ENCODE measurements at regions of chr1 and their contacts with region 1.

Region 1: DNA sequence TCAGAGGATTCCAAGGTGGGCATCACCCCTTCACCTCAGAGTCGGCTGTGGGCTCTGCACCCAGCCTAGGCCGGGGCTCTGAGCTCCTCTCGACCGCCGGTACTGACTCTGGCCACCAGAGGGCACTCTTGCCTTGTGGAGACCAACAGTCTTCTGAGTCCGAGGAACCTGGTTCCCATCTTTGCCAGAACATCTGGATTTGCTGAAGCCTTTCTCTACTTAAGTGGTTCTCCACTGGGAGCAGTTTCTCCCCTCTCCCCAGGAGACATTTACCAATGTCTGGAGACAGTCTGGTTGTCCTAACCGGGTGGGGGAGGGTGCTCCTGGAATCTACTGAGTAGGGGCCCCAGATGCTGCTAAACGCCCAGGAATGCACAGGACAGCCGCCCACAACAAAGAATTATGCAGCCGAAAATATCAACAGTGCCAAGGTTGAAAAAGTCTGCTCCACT is 9.4 kb downstream of the ETV3L start:
- DNase-seq: peak; percentile 90
- H3K4me3 Mint-ChIP-seq: no peak overlapping the region
- H3K27ac Mint-ChIP-seq: no peak overlapping the region
- H3K4me1 Mint-ChIP-seq: peaks cover 17% of the 10 kb centered on the region
- H3K27me3 Mint-ChIP-seq: no peaks in the 10 kb centered on the region
- CTCF ChIP-seq: peak; percentile 99

Region 2: DNA sequence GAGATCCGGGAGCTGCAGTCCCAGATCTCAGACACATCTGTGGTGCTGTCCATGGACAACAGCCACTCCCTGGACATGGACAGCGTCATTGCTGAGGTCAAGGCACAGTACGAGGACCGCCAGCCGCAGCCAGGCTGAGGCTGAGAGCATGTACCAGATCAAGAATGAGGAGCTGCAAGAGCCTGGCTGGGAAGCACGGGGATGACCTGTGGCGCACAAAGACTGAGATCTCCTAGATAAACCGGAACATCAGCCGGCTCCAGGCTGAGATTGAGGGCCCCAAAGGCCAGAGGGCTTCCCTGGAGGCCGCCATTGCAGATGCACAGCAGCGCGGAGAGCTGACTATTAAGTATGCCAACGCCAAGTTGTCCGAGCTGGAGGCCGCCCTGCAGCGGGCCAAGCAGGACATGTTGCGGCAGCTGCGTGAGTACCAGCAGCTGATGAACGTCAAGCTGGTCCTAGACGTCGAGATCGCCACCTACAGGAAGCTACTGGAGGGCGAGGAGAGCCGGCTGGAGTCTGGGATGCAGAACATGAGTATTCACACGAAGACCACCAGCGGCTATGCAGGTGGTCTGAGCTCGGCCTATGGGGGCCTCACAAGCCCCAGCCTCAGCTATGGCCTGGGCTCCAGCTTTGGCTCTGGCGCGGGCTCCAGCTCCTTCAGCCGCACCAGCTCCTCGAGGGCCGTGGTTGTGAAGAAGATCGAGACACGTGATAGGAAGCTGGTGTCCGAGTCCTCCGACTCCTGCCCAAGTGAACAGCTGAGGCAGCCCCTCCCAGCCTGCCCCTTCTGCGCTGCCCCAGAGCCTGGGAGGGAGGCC is 16.1 kb before region 1 on chr1:
- CTCF ChIA-PET with region 1: interaction called, 31 read pairs
- POLR2A ChIA-PET with region 1: no interaction called
- intact Hi-C with region 1: no loop called
- DNase-seq: peak; percentile 81
- H3K4me3 Mint-ChIP-seq: no peak overlapping the region
- H3K27ac Mint-ChIP-seq: no peak overlapping the region
- H3K4me1 Mint-ChIP-seq: no peaks in the 10 kb centered on the region
- H3K27me3 Mint-ChIP-seq: no peaks in the 10 kb centered on the region
- CTCF ChIP-seq: peak; percentile 60

Region 3: DNA sequence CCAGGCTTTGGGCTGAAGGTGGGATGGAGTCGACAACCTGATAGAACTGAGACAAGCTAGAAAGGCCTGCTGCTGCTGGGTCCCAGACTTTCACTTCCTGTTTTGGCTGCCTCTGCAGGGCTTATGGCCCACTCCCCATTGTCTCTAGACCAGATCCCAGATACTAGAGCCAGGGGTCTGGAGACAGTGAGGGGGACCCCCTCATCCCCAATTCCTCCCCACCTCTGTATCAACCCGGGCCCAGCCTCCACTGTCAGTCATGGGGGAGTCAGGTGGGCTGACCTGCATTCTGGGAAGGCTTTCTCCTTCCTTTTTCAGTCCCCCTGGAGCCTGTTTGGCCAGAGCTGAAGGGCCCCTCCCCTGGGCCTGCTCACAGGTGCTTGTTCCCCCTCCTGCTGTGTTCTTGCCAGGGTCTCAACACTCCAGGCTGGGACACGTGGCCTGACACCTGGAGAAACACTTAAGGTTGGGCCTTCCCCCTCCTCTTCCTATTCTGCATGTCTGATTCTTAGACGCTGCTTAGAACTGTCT is 27.4 kb after region 1 on chr1:
- CTCF ChIA-PET with region 1: interaction called, 32 read pairs
- POLR2A ChIA-PET with region 1: no interaction called
- intact Hi-C with region 1: no loop called
- DNase-seq: no peak
- H3K4me3 Mint-ChIP-seq: no peak overlapping the region
- H3K27ac Mint-ChIP-seq: no peak overlapping the region
- H3K4me1 Mint-ChIP-seq: no peaks in the 10 kb centered on the region
- H3K27me3 Mint-ChIP-seq: peaks cover 13% of the 10 kb centered on the region
- CTCF ChIP-seq: no peak

Region 4: DNA sequence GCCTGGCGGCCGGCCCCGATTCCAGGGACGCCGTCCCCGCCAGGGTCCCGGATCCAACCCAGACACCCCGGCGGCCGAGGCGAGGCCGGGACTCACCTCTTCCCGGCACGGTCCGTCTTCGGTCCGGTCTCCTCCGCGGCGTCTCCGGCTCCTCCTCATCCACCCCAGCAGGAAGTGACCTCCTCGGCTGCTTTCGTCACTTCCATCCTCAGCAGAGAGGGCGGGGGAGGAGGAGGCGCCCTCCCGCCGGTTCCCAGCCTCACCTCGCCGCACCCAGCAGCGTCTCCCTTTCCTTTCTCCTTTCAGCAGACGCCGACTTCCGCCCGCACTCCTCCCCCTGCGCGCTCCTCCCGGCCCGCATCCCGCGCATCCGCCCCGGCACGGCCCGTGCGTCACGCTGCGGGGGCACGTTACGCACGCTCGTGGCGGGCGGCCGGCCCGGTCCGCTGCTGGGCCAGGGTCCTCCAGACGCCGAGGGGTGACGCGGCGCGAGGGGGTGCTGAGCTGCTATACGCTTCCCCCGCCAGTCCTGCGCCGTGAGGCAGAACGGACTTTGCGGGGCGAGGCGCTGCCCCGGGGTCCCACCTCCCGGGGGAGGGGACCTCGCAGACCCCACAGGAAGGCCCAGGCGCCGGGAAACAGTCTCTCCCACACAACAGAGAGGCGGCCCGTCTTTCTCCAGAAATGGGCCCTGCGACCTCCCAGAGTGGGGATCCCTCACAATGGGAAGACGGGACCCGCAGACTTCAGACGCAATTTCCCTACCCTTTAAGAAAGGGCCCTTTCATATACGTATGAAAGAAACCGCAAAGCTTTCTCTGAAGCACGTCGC is 48.2 kb after region 1 on chr1 and contains the start of gene ETV3:
- CTCF ChIA-PET with region 1: interaction called, 183 read pairs
- POLR2A ChIA-PET with region 1: interaction called, 45 read pairs
- intact Hi-C with region 1: loop called (anchors 5 kb)
- DNase-seq: peak; percentile 97
- H3K4me3 Mint-ChIP-seq: peak within 1 kb of the TSS; percentile 79
- H3K27ac Mint-ChIP-seq: peak within 1 kb of the TSS; percentile 76
- H3K4me1 Mint-ChIP-seq: peaks cover 29% of the 10 kb centered on the region
- H3K27me3 Mint-ChIP-seq: no peaks in the 10 kb centered on the region
- CTCF ChIP-seq: no peak
- total RNA-seq, gene ETV3: 28.6 and 35.0 TPM in 2 replicates

Region 5: DNA sequence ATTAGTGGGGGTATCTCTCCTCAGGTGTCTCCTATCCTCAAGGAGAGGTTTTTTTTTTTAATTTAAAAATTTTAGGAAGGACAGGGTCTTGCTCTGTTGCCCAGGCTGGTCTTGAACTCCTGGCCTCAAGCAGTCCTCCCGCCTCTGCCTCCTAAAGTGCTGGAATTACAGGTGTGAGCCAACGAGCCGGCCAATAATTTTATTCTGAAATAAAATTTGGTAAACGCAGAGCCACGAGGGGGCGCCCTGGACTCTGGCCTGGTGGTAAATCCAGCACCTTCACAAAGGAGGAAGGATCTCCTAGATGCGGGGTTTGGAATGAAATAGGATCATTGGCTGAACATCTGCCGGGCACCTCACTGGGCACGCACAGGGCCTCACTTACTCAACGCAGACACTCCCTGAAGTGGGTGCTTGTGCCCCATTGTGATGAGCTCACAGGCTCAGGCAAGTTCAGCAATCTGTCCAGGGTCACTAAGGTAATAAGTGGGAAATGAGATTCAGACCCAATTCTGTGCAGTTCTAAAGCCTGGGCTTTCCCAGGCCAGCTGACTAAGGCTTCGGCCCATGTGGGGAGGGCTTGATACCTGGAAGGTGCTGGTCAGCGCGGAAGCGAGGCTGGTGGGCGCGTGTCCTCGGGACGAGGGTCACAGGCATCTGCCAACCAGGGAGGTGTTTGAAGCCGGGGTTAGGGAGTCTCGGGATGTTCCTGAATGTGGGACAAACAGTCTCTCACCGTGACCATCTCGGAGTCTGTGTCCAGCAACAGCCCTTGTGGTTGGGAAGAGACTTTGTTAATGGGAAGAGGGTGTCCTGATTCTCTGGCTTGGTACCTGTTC is 80.7 kb after region 1 on chr1:
- CTCF ChIA-PET with region 1: interaction called, 19 read pairs
- POLR2A ChIA-PET with region 1: no interaction called
- intact Hi-C with region 1: no loop called
- DNase-seq: peak; percentile 57
- H3K4me3 Mint-ChIP-seq: no peak overlapping the region
- H3K27ac Mint-ChIP-seq: no peak overlapping the region
- H3K4me1 Mint-ChIP-seq: no peaks in the 10 kb centered on the region
- H3K27me3 Mint-ChIP-seq: peaks cover 56% of the 10 kb centered on the region
- CTCF ChIP-seq: peak; percentile 49

Region 6: GRCh38 chr1:157490467-157491165 is 400.4 kb after region 1 on chr1:
- CTCF ChIA-PET with region 1: interaction called, 18 read pairs
- POLR2A ChIA-PET with region 1: no interaction called
- intact Hi-C with region 1: loop called (anchors 5 kb)
- DNase-seq: peak; percentile 80
- H3K4me3 Mint-ChIP-seq: no peak overlapping the region
- H3K27ac Mint-ChIP-seq: no peak overlapping the region
- H3K4me1 Mint-ChIP-seq: peaks cover 5% of the 10 kb centered on the region
- H3K27me3 Mint-ChIP-seq: peaks cover 44% of the 10 kb centered on the region
- CTCF ChIP-seq: peak; percentile 82

Measured in MCF 10A (cell line).